ENCODE measurements at regions of chr4 and their contacts with region 1.

Region 1: GRCh38 chr4:22115262-22115661 is 166.7 kb upstream of the KCNIP4 start:
- DNase-seq: no peak
- H3K4me3 Mint-ChIP-seq: no peak overlapping the region
- H3K27ac Mint-ChIP-seq: no peak overlapping the region
- H3K4me1 Mint-ChIP-seq: no peaks in the 10 kb centered on the region
- H3K27me3 Mint-ChIP-seq: no peaks in the 10 kb centered on the region

Region 2: GRCh38 chr4:21790438-21791029 is 324.7 kb before region 1 on chr4:
- intact Hi-C with region 1: loop called (anchors 10 kb)
- DNase-seq: no peak
- H3K4me3 Mint-ChIP-seq: no peak overlapping the region
- H3K27ac Mint-ChIP-seq: no peak overlapping the region
- H3K4me1 Mint-ChIP-seq: no peaks in the 10 kb centered on the region
- H3K27me3 Mint-ChIP-seq: no peaks in the 10 kb centered on the region

Region 3: GRCh38 chr4:22003878-22004277 is 111.4 kb before region 1 on chr4:
- intact Hi-C with region 1: no loop called
- DNase-seq: no peak
- H3K4me3 Mint-ChIP-seq: no peak overlapping the region
- H3K27ac Mint-ChIP-seq: no peak overlapping the region
- H3K4me1 Mint-ChIP-seq: no peaks in the 10 kb centered on the region
- H3K27me3 Mint-ChIP-seq: no peaks in the 10 kb centered on the region

Region 4: GRCh38 chr4:22045051-22045630 is 70.1 kb before region 1 on chr4:
- intact Hi-C with region 1: no loop called
- DNase-seq: no peak
- H3K4me3 Mint-ChIP-seq: no peak overlapping the region
- H3K27ac Mint-ChIP-seq: no peak overlapping the region
- H3K4me1 Mint-ChIP-seq: no peaks in the 10 kb centered on the region
- H3K27me3 Mint-ChIP-seq: no peaks in the 10 kb centered on the region